K562 (cell line): ENCODE measurements at regions of chr17 and their contacts with region 1.

Region 1: DNA sequence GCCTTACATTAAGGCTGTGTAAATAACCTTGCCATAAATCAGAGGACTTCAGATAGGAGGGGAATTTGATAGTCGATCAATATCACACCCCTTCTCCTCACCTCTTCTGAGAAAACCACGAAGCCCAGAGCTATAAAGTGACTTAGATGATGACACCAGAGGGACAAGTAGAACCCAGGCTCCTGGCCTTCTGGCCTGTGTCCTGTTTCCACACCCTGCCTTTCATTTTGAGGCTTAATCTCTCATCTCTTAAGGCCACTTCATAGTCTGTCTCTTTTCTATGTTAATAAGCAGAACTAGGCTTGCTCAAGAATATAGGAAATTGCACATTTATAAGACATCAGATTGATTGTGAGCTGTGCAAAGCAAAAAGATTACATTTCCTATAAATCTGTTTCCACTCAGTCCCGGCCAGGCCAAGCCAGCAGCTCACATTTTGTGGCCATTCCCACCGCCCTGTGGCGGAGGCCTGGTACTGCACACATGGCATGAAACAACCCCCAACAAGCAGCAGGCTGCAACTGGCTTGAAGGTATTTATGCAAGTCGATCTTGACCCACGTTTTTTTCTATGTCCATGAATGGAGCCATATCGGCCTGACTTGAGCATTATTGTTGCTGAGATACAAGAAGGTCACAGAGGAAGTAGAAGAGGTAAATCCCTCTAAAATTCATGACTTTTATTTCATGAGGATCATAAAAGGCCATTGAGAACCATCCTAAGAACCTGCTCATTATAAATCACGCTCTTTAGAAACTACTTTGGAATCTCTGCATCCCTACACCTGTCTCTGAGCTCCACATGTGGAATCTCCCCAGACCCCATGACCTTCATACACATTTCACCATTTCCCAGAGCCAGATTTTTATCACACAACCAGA is 93.7 kb downstream of the PMP22 start:
- DNase-seq: peak; percentile 32 to 64 (median 42)
- ATAC-seq: peak; percentile 87
- H3K4me3 ChIP-seq: no peak overlapping the region
- H3K27ac ChIP-seq: no peak overlapping the region
- H3K4me1 ChIP-seq: no peaks in the 10 kb centered on the region
- H3K27me3 ChIP-seq: no peaks in the 10 kb centered on the region; a peak in 1 of 5 replicates
- CTCF ChIP-seq: peak; percentile 60 to 73 (median 65)
- EP300 ChIP-seq: no peak
- POLR2A ChIP-seq: no peak
- RAD21 ChIP-seq: peak; percentile 57 to 78

Region 2: GRCh38 chr17:15213381-15214087 is 42.1 kb after region 1 on chr17:
- CTCF ChIA-PET with region 1: no interaction called
- POLR2A ChIA-PET with region 1: no interaction called
- in situ Hi-C with region 1: no loop called
- intact Hi-C with region 1: loop called (anchors 5 kb)
- DNase-seq: peak in 2 of 4 experiments; percentile 30 to 65
- ATAC-seq: no peak
- H3K4me3 ChIP-seq: no peak overlapping the region
- H3K27ac ChIP-seq: no peak overlapping the region
- H3K4me1 ChIP-seq: no peaks in the 10 kb centered on the region
- H3K27me3 ChIP-seq: no peaks in the 10 kb centered on the region
- CTCF ChIP-seq: peak; percentile 31 to 64 (median 42); a peak in 4 of 6 replicates
- EP300 ChIP-seq: no peak
- POLR2A ChIP-seq: no peak
- RAD21 ChIP-seq: peak; percentile 42 to 73